Motor neuron (in vitro differentiated cells): ENCODE measurements at regions of chr4 and their contacts with region 1.

Region 1: DNA sequence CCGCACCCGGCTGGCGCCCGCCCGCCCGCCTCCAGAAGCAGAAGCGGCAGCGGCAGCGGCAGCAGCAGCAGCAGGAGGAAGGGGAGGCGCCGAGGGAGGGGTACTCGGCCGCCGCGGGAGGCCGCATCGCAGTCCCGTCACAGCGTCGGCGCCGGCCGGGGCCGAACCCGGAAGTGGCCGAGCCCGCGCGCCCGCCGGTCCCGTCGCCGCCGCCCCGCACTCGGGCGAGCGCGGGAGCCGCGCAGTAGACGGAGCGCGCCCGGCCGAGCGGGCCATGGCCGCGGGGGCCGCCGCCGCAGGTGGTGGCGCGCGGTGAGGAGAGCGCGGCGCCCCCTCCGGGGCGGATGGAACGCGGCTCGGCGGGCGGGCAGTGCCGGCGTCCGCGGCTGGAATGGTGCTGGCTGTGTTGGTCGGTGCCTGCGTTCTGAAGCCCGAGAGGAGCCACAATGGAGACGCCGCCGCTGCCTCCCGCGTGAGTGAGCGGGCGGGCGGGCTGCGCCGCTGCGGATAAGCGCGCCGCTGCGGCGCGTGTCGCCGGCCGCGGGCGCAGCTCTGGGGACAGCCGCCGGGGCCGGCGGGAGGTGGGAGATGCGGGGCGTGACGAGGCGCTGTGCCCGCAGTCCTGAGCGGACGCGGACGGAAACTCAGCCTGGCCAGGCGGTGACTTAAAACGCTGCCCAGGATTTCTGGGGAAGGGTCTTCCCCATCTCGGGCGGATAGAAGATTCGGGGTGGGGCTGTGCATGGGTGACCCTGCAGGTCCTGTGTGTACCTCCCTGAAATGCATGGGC is at the start of gene KLHL2:
- ATAC-seq: peak; percentile 82 to 92 (median 88)
- H3K4me3 ChIP-seq: peak within 1 kb of the TSS; percentile 65 to 95 (median 80)
- H3K27ac ChIP-seq: peak within 1 kb of the TSS; percentile 78 to 80
- H3K4me1 ChIP-seq: peaks cover 18 to 26% of the 10 kb centered on the region in 2 donors
- total RNA-seq, gene KLHL2: 13.2 to 23.0 (median 17.2) TPM

Region 2: DNA sequence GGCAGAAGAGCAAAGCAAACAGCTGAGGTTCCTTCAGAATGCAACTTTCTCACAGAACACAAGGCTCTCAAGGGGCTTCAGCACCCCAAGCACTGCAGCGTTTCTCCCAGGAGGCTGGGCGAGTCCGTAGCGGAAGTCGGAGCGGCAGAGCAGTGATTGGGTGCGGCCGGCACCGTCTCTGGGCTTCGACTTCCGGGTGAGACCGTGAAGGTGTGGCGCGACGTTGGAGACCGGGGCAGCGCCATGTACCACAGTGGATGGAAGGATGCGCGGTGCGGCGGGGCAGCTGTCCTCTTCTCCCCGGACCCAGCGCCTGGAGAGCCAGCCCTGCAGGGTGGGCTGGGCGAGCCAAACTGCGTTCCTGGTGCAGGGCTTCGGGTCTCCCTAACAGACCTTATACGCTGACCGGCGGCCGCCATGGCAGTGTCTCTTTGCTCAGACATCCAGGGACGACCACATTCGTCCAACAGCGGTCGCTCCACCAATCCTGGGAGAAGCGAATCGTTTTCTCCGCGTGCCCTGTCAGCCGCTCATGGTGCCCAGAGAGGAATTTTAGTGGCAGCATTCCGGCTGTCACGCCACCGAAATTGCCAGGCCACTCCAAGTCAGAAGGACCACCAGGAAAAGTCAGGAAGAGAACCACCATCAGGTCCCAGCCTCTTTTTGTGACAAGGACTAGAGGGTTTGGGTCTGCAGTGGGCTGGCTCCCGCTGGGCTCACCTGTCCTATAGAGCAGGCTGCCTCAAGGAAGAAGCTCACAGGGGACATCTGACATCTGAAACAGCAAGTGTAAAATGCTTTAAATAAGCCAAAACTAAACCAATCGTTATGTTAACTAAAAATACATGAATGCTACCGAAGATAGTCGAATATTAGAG is 250.6 kb before region 1 on chr4:
- in situ Hi-C with region 1: no loop called
- ATAC-seq: peak; percentile 92 to 100 (median 100)
- H3K4me3 ChIP-seq: peak overlapping the region; percentile 54 to 82 (median 67)
- H3K27ac ChIP-seq: peak overlapping the region; percentile 84 to 92
- H3K4me1 ChIP-seq: peaks cover 0 to 3% of the 10 kb centered on the region in 2 donors

Region 3: GRCh38 chr4:165152527-165152926 is 55.1 kb before region 1 on chr4:
- in situ Hi-C with region 1: loop called in 1 of 9 experiments (anchors 10 kb)
- ATAC-seq: peak in 2 of 8 experiments; percentile 69 to 72
- H3K4me3 ChIP-seq: no peak overlapping the region
- H3K27ac ChIP-seq: no peak overlapping the region
- H3K4me1 ChIP-seq: no peaks in the 10 kb centered on the region